ENCODE measurements at regions of chr11 and their contacts with region 1.

Region 1: DNA sequence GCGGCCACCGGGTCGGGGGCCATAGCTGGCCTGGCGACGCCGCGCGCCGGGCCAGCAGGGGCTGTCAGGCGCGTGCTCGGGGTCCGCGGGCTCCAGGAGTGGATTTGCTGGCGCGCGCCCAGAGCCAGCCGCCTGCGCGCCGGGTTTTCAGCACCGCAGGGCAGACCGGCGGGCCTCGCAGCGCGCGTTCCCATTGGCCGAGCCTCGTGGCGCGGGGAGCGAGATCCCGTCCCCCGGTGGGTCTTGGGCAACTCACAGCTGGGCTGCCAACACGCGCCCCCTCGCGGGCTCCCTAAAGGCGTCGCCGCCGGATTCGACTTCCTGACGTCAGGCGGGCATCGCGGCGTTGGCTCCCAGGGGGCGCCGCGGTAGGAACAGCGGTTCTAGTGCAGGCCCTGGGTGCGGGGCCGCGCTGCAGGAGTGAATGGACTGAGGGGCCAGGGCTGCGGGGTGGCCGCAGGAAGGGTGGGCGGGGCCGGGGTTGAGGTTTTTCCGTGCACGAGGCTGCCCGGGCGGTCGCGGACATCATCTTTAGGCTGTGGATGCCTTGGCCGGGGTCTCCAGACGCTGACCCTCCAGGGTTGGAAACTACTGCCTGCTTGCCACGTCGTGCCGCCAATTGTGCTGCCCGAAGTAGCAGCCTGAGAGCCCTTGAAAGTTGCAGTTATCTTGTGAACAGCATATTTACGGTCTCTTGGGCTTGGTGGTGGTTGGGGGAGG is at the start of gene FADS1:
- DNase-seq: peak; percentile 95
- H3K4me3 ChIP-seq: peak within 1 kb of the TSS; percentile 83 to 87
- H3K27ac ChIP-seq: peak within 1 kb of the TSS; percentile 88 to 98
- H3K4me1 ChIP-seq: peaks cover 17 to 19% of the 10 kb centered on the region in 2 experiments; a peak in 3 of 4 replicates
- H3K27me3 ChIP-seq: no peaks in the 10 kb centered on the region
- CTCF ChIP-seq: peak; percentile 63
- EP300 ChIP-seq: no peak
- RAD21 ChIP-seq: peak; percentile 36
- polyA plus RNA-seq, gene FADS1: 20.6 and 26.4 TPM in 2 replicates

Region 2: GRCh38 chr11:61803889-61804647 is 12.8 kb before region 1 on chr11:
- CTCF ChIA-PET with region 1: interaction called, 149 read pairs
- POLR2A ChIA-PET with region 1: interaction called, 37 read pairs
- DNase-seq: no peak
- H3K4me3 ChIP-seq: no peak overlapping the region
- H3K27ac ChIP-seq: no peak overlapping the region
- H3K4me1 ChIP-seq: no peaks in the 10 kb centered on the region
- H3K27me3 ChIP-seq: no peaks in the 10 kb centered on the region
- CTCF ChIP-seq: no peak
- EP300 ChIP-seq: no peak
- RAD21 ChIP-seq: no peak

Region 3: DNA sequence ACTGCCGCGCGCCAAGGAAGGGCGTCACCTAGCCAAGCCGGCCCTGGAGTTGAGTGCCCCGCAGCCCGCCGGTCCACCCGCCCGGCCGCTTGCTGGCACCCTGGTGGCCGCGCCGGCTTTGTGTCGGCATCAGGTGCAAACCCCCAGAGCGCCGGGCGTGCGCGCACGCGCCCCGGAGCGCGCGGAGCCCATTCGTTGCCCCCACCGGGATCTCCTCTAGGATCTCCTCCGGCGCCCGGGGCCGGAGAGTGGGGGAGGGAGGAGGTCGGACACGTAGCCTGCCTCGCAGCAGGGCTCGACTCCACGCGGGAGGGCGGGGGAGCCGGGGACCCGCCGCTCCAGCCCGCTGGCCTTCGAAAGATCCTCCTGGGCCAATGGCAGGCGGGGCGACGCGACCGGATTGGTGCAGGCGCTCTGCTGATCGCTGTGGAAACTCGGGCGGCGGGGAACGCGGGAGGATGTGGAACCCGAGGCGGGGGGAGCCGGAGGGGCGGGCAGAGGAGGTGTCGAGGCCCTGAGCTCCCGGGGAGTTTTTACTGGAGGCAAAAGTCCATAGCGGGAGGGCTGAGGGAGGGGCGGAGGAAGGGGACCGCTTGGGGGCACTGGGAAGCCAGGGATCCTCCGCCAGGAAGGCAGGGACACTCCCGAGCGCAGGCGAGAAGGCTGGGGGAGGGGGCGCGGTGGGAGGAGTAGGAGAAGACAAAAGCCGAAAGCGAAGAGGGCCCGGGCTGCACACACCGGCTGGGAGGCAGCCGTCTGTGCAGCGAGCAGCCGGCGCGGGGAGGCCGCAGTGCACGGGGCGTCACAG is 10.9 kb after region 1 on chr11 and contains the start of gene FADS2:
- CTCF ChIA-PET with region 1: interaction called, 63 read pairs
- POLR2A ChIA-PET with region 1: interaction called, 84 read pairs
- DNase-seq: peak; percentile 93
- H3K4me3 ChIP-seq: peak within 1 kb of the TSS; percentile 70 to 96
- H3K27ac ChIP-seq: peak within 1 kb of the TSS; percentile 21 to 99
- H3K4me1 ChIP-seq: peaks cover 10 to 46% of the 10 kb centered on the region in 2 experiments; a peak in 3 of 4 replicates
- H3K27me3 ChIP-seq: no peaks in the 10 kb centered on the region
- CTCF ChIP-seq: no peak
- EP300 ChIP-seq: peak; percentile 16 to 32; a peak in 2 of 4 replicates
- RAD21 ChIP-seq: no peak
- polyA plus RNA-seq, gene FADS2: 67.8 and 77.1 TPM in 2 replicates